Activated T-helper 1 cell treated with anti-CD3 and anti-CD28 coated beads, Interleukin-12 subunit alpha, Interleukin-12 subunit beta, Interleukin-2, Interleukin-4 antibody, amounts not matched to agents 30 ng/mL and 10 ng/mL and 1 ng/mL, durations not matched to agents 14 hours and 24 hours and 36 hours (primary cell): ENCODE measurements at regions of chr13 and their contacts with region 1.

Region 1: GRCh38 chr13:53250266-53250875 is 221.8 kb downstream of the OLFM4 start:
- DNase-seq: no peak
- H3K4me3 Mint-ChIP-seq: no peak overlapping the region
- H3K27ac Mint-ChIP-seq: no peak overlapping the region
- H3K4me1 Mint-ChIP-seq: no peaks in the 10 kb centered on the region
- H3K27me3 Mint-ChIP-seq: no peaks in the 10 kb centered on the region

Region 2: DNA sequence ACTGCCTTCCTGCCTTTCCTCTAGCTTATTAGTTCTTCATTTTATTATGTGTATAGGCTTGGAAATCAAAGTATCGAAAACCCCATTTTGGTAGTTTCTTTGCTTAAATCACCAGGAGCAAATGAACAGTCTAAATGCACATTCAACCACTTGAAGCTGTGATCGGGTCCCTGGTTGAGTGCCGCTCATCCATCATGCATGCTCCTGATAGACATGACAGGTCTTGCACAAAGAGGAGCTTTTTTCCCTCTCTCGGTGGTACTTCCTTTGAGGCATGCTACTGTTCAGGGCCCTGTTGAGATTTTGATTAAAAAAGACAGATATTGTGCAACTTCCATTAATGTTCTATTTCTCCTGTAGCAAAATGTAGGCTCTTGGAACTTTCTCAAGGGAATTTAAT is 35.9 kb before region 1 on chr13:
- intact Hi-C with region 1: no loop called
- DNase-seq: no peak
- H3K4me3 Mint-ChIP-seq: no peak overlapping the region
- H3K27ac Mint-ChIP-seq: no peak overlapping the region
- H3K4me1 Mint-ChIP-seq: no peaks in the 10 kb centered on the region
- H3K27me3 Mint-ChIP-seq: no peaks in the 10 kb centered on the region

Region 3: DNA sequence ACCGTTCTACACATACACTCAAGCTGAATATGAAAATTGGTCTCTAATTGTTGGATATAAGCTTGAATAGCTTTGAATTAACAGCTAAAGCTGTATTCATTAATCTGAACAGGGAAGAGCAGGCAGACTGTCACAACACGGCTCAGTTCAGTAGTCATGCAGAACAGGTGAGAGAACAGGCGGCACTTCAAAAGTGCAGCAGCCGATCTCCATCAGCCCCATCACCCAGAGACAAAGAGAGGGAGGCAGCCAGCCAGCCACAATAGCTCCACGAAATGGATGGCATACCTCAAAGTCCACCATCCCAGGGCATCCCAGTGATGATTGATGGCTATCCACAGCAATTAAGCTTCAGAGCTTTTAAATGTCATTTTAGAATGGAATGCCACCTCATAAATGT is 197.5 kb after region 1 on chr13:
- intact Hi-C with region 1: no loop called
- DNase-seq: no peak
- H3K4me3 Mint-ChIP-seq: no peak overlapping the region
- H3K27ac Mint-ChIP-seq: no peak overlapping the region
- H3K4me1 Mint-ChIP-seq: no peaks in the 10 kb centered on the region
- H3K27me3 Mint-ChIP-seq: no peaks in the 10 kb centered on the region

Region 4: GRCh38 chr13:53782488-53782961 is 532.2 kb after region 1 on chr13:
- intact Hi-C with region 1: loop called (anchors 1 kb)
- DNase-seq: peak; percentile 0
- H3K4me3 Mint-ChIP-seq: no peak overlapping the region
- H3K27ac Mint-ChIP-seq: no peak overlapping the region
- H3K4me1 Mint-ChIP-seq: no peaks in the 10 kb centered on the region
- H3K27me3 Mint-ChIP-seq: no peaks in the 10 kb centered on the region